Thyroid gland (tissue), 4 donors: ENCODE measurements at regions of chr10 and their contacts with region 1.

Region 1: DNA sequence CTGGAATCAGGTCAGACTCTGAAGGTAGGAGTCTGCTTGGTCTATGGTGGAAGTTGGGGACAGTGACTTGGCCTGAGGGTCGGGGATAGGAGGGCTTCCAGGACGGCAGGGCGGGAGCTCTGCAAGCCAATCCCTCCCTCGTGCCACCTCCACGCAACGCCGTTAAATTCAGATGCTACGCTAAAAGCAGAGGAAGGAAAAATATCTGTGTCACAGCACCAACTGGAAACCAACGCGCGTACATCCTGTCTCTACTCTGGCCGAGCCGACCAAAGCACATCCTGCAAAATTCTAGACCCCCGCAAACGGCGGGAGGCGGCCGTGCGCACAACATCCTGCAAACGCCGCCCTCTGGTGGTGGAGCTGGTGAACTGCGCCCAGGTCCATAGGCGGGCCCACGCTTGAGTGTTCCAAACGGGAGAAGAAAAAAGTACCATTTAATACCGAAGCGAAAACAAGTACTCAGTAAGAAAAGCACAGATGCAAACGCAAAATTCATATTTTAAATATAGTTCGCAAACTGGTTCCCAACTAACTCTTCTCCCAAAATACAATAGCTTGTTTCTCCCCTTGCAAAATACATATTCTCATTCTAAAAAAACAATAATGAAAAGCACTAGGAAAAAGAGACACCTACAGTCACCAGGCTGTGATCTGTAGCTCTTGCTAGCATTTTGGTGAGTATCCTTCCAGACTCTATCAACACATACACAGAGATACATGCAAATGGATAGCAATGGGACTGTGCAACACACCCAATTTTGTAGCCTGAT is 45.7 kb upstream of the HSPA12A start:
- DNase-seq: peak; percentile 83 to 87
- H3K4me3 ChIP-seq: peak overlapping the region in 1 of 3 donors; percentile 28
- H3K27ac ChIP-seq: peak overlapping the region in 2 of 3 donors; percentile 25 to 69
- H3K4me1 ChIP-seq: peaks cover 7 to 10% of the 10 kb centered on the region in 2 donors
- H3K27me3 ChIP-seq: no peaks in the 10 kb centered on the region
- CTCF ChIP-seq: peak; percentile 94 to 99 (median 98)
- POLR2A ChIP-seq: no peak

Region 2: DNA sequence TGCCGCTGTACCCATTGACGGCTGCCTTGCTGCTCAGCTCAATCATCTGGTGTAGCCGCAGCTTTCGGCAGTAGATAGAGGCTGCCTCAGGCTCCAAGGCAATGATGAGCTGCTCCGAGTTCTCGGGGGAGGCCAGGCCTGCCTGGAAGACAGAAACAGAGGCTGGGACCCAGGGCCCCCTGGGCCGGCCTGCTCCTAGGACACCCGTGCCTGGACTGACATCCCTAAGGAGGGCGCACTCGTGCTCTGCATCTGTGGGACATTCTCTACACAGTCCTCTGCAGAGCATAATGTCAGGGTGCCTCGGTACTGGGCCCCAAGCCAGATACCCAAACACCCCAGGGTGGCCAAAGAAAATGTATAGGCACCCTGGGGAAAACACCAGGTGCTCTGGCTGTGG is 104.3 kb before region 1 on chr10:
- intact Hi-C with region 1: loop called (anchors 5 kb)
- DNase-seq: no peak
- H3K4me3 ChIP-seq: no peak overlapping the region
- H3K27ac ChIP-seq: no peak overlapping the region
- H3K4me1 ChIP-seq: peaks cover 3 to 23% of the 10 kb centered on the region in 2 donors
- H3K27me3 ChIP-seq: no peaks in the 10 kb centered on the region
- CTCF ChIP-seq: no peak
- POLR2A ChIP-seq: no peak